ENCODE measurements at regions of chr12 and their contacts with region 1.

Region 1: DNA sequence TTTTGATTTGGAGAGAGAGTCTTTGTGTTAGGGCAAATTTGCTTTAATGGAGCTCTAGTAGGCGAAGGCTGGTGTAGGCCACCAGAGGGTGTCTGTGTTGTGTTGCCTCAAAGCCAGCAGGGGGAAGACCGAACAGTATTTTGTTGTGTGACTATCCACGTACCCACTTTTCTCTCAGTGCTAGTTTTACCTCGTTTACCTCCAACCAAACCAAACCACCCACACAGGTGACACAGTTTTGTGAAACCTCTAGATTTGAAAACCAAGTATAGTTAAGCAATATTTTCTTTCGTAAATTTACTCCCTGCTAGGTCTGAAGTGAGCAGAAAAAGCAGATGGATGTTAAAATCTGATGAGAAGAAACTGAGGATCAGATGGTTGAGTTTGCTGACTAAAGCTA is 36.3 kb upstream of the NPFF start:
- DNase-seq: peak; percentile 70
- H3K4me3 ChIP-seq: no peak overlapping the region
- H3K27ac ChIP-seq: peak overlapping the region in 1 of 2 experiments; percentile 19; a peak in 1 of 4 replicates
- H3K4me1 ChIP-seq: 0 out of 4 replicates have a peak, but pooled peaks cover 0 to 4% of the 10 kb centered on the region in 2 experiments
- H3K27me3 ChIP-seq: no peaks in the 10 kb centered on the region
- CTCF ChIP-seq: peak; percentile 86
- EP300 ChIP-seq: no peak
- RAD21 ChIP-seq: peak; percentile 89

Region 2: GRCh38 chr12:53518381-53518780 is 25.2 kb before region 1 on chr12:
- CTCF ChIA-PET with region 1: interaction called, 19 read pairs
- POLR2A ChIA-PET with region 1: no interaction called
- DNase-seq: no peak
- H3K4me3 ChIP-seq: no peak overlapping the region
- H3K27ac ChIP-seq: no peak overlapping the region
- H3K4me1 ChIP-seq: no peaks in the 10 kb centered on the region
- H3K27me3 ChIP-seq: no peaks in the 10 kb centered on the region
- CTCF ChIP-seq: no peak
- EP300 ChIP-seq: no peak
- RAD21 ChIP-seq: no peak

Region 3: DNA sequence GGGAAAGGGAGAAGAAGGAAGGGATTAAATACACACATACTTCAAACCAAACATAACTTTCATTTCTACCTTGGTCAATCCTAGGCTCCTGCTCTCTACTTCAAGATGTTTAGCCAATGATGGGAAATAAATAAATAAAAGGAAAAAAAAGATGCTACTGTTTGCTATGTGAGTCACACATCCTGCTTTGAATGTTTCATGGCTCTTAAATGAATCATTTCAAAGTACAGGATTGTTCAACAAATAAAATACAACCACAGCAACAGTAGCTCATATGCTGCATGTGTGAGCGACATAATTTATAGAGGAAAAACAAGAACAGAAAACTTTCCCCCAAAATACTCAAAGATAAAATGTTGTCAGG is 18.0 kb after region 1 on chr12:
- CTCF ChIA-PET with region 1: interaction called, 22 read pairs
- POLR2A ChIA-PET with region 1: no interaction called
- DNase-seq: no peak
- H3K4me3 ChIP-seq: no peak overlapping the region
- H3K27ac ChIP-seq: peak overlapping the region; percentile 39 to 89; a peak in 3 of 4 replicates
- H3K4me1 ChIP-seq: peaks cover 0 to 19% of the 10 kb centered on the region in 2 experiments; a peak in 2 of 4 replicates
- H3K27me3 ChIP-seq: no peaks in the 10 kb centered on the region
- CTCF ChIP-seq: no peak
- EP300 ChIP-seq: no peak
- RAD21 ChIP-seq: no peak

Region 4: DNA sequence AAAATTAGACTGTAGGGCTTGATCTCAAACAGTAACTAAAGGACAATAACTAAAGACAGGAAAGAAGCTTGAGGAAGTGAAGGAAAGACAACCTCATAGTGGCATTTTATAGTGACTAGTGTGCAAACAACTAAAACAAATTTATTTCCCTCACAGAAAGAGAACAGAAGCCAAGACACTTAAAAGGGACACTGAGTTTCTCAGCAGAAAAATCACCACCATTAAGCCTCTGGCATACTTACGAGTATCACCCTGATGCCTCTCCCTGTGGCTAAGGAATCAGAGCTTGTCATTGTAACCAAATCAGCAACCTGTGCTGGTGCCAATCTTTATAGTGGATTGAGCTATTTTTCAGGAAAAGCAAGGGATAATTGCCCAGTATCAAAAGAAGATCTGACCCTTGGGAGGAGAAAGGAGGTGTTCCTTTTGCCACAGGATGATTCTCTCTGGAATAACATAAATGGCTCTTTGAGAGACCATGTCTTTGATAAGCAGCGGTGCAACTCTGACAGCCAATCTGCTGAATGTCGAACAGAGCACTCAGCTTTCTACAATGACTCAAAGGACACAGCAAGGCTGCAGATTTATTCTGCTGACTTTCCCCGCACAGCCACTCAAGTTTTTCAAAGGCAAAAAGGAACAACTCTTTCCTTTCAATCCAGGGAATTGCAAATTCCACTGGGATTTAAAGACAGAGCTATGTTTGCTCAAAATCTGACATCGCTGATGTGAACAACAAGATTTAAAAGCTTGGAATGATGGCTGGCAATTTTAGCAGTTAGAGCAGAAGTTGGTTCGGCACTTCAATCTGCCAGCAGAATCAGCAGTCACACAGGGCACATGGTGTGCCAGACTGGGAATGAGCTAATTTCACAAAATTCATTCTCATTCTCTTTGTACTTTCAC is 48.0 kb after region 1 on chr12:
- CTCF ChIA-PET with region 1: interaction called, 14 read pairs
- POLR2A ChIA-PET with region 1: no interaction called
- DNase-seq: no peak
- H3K4me3 ChIP-seq: peak overlapping the region; percentile 25 to 26; a peak in 3 of 4 replicates
- H3K27ac ChIP-seq: peak overlapping the region; percentile 41 to 82; a peak in 3 of 4 replicates
- H3K4me1 ChIP-seq: peaks cover 17% of the 10 kb centered on the region in 2 experiments
- H3K27me3 ChIP-seq: no peaks in the 10 kb centered on the region
- CTCF ChIP-seq: no peak
- EP300 ChIP-seq: no peak
- RAD21 ChIP-seq: no peak

Region 5: DNA sequence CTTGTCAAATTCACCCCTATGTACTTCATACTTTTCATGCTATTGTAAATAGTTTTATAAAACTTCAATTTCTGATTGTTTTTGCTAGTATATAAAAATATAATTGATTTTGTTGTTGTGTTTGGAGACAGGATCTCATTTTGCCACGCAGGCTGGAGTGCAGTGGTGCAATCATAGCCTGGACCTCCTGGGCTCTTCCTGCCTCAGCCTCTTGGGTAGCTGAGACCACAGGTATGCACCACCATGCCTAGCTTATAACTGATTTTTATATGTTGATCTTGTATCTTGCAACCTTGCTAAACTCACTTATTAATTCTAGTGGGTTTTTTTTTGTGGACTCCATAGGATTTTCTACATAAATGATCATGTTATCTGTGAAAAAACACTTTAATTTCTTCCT is 108.8 kb after region 1 on chr12:
- CTCF ChIA-PET with region 1: interaction called, 14 read pairs
- POLR2A ChIA-PET with region 1: no interaction called
- DNase-seq: no peak
- H3K4me3 ChIP-seq: no peak overlapping the region
- H3K27ac ChIP-seq: no peak overlapping the region
- H3K4me1 ChIP-seq: 0 out of 4 replicates have a peak, but pooled peaks cover 0 to 8% of the 10 kb centered on the region in 2 experiments
- H3K27me3 ChIP-seq: no peaks in the 10 kb centered on the region
- CTCF ChIP-seq: no peak
- EP300 ChIP-seq: no peak
- RAD21 ChIP-seq: no peak

Measured in SK-N-SH (cell line).